ENCODE measurements at regions of chr2 and their contacts with region 1.

Region 1: GRCh38 chr2:61694312-61695274 is 156.4 kb upstream of the XPO1 start:
- DNase-seq: peak; percentile 94
- ATAC-seq: peak; percentile 96
- H3K4me3 ChIP-seq: peak overlapping the region; percentile 50 to 84 (median 79)
- H3K4me3 Mint-ChIP-seq: peak overlapping the region; percentile 94
- H3K27ac ChIP-seq: peak overlapping the region; percentile 54 to 82
- H3K27ac Mint-ChIP-seq: peak overlapping the region; percentile 88
- H3K4me1 ChIP-seq: peaks cover 9 to 17% of the 10 kb centered on the region in 2 donors
- H3K4me1 Mint-ChIP-seq: peaks cover 13% of the 10 kb centered on the region
- H3K27me3 ChIP-seq: no peaks in the 10 kb centered on the region
- H3K27me3 Mint-ChIP-seq: no peaks in the 10 kb centered on the region
- CTCF ChIP-seq: peak; percentile 70

Region 2: DNA sequence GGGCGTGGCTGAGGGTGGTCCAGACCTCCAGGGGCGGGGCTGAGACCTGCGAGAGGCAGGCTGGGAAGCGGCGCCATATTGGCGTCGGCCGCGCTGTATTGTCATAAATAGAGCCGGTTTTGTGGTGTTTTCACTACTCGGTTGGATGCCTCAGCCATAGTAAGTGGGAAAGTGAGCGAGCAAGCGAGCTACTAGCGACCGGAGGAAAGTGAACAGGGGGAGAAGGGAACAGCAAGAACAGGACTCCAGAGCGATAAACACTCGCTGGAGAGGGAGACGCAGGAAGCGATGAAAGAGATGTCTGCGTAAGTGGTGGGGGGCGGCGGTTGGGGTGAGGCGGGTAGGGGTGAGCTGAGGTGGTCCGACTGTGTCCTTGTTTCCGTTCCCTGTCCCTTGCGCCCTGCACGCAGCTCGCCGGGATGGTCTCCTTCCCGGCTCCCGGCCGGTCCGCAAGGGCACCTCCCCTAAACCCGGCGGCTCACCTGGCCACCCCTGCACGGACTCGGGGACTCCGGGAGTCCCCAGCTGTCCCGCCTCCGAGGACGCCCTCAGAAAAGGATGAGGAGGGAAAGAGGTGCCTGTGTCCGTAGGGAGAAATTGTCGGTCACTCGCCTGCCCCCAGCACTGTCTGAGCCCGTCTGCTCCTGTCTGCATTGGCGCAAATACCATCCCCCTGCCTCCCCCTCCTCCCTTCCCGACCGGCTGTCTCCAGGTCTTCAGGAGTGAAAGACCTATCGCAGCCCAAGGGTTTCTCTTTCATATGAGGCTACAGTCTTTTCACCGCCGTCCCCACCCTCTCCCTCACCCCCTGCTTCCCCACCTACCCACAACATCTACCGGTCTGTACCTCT is 938.2 kb before region 1 on chr2 and contains the start of gene PAPOLG:
- CTCF ChIA-PET with region 1: no interaction called
- POLR2A ChIA-PET with region 1: no interaction called
- intact Hi-C with region 1: loop called (anchors 1 kb)
- DNase-seq: peak; percentile 96
- ATAC-seq: peak; percentile 100
- H3K4me3 ChIP-seq: peak within 1 kb of the TSS; percentile 77 to 100 (median 87)
- H3K4me3 Mint-ChIP-seq: peak within 1 kb of the TSS; percentile 97
- H3K27ac ChIP-seq: peak within 1 kb of the TSS; percentile 85 to 87
- H3K27ac Mint-ChIP-seq: peak within 1 kb of the TSS; percentile 96
- H3K4me1 ChIP-seq: peaks cover 13 to 15% of the 10 kb centered on the region in 2 donors
- H3K4me1 Mint-ChIP-seq: peaks cover 29% of the 10 kb centered on the region
- H3K27me3 ChIP-seq: no peaks in the 10 kb centered on the region
- H3K27me3 Mint-ChIP-seq: no peaks in the 10 kb centered on the region
- CTCF ChIP-seq: no peak
- total RNA-seq, gene PAPOLG: 27.5 and 37.2 TPM in 2 replicates

Region 3: GRCh38 chr2:61044636-61045035 is 650.0 kb before region 1 on chr2:
- CTCF ChIA-PET with region 1: no interaction called
- POLR2A ChIA-PET with region 1: no interaction called
- intact Hi-C with region 1: no loop called
- DNase-seq: peak; percentile 16
- ATAC-seq: peak; percentile 39
- H3K4me3 ChIP-seq: no peak overlapping the region
- H3K4me3 Mint-ChIP-seq: no peak overlapping the region
- H3K27ac ChIP-seq: no peak overlapping the region
- H3K27ac Mint-ChIP-seq: peak overlapping the region; percentile 5
- H3K4me1 ChIP-seq: peaks cover 0 to 6% of the 10 kb centered on the region in 2 donors
- H3K4me1 Mint-ChIP-seq: peaks cover 20% of the 10 kb centered on the region
- H3K27me3 ChIP-seq: no peaks in the 10 kb centered on the region
- H3K27me3 Mint-ChIP-seq: no peaks in the 10 kb centered on the region
- CTCF ChIP-seq: no peak

Region 4: GRCh38 chr2:61493523-61493942 is 201.1 kb before region 1 on chr2:
- CTCF ChIA-PET with region 1: no interaction called
- POLR2A ChIA-PET with region 1: no interaction called
- intact Hi-C with region 1: no loop called
- DNase-seq: peak; percentile 18
- ATAC-seq: no peak
- H3K4me3 ChIP-seq: no peak overlapping the region
- H3K4me3 Mint-ChIP-seq: no peak overlapping the region
- H3K27ac ChIP-seq: peak overlapping the region in 1 of 2 donors; percentile 74
- H3K27ac Mint-ChIP-seq: peak overlapping the region; percentile 43
- H3K4me1 ChIP-seq: peaks cover 5 to 11% of the 10 kb centered on the region in 2 donors
- H3K4me1 Mint-ChIP-seq: peaks cover 14% of the 10 kb centered on the region
- H3K27me3 ChIP-seq: no peaks in the 10 kb centered on the region
- H3K27me3 Mint-ChIP-seq: no peaks in the 10 kb centered on the region
- CTCF ChIP-seq: no peak

Region 5: DNA sequence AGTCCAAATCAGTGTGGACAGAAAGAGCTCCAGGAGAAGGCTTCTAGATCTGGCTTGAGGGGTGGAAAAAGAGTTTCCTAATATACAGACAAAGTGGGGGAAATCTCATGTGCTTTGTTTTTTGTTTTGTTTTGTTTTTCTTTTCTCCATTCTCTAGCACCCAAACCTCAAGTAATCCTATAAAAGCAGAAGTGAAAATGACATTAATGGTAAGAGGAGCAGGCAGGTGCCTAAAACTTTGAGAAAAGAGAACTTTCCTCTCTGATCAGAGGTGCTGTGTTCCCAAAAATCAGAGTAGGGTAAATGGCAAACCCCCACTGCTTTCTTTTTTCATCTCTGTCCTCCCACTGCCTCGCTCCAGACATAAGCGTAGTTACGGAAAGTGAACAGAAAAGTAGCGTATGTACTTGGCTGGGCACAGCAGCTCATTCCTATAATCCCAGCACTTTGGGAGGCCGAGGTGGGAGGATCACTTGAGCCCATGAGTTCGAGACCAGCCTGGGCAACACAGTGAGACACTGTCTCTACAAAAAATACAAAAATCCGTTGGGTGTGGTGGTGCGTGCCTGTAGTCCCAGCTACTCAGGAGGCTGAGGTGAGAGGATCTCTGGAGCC is 81.5 kb after region 1 on chr2:
- CTCF ChIA-PET with region 1: interaction called, 3 read pairs
- POLR2A ChIA-PET with region 1: no interaction called
- intact Hi-C with region 1: loop called (anchors 5 kb)
- DNase-seq: peak; percentile 71
- ATAC-seq: peak; percentile 81
- H3K4me3 ChIP-seq: peak overlapping the region in 2 of 5 experiments; percentile 21 to 43
- H3K4me3 Mint-ChIP-seq: peak overlapping the region; percentile 61
- H3K27ac ChIP-seq: peak overlapping the region; percentile 65 to 71
- H3K27ac Mint-ChIP-seq: peak overlapping the region; percentile 90
- H3K4me1 ChIP-seq: peaks cover 18 to 21% of the 10 kb centered on the region in 2 donors
- H3K4me1 Mint-ChIP-seq: peaks cover 21% of the 10 kb centered on the region
- H3K27me3 ChIP-seq: no peaks in the 10 kb centered on the region
- H3K27me3 Mint-ChIP-seq: peaks cover 13% of the 10 kb centered on the region
- CTCF ChIP-seq: no peak

Region 6: DNA sequence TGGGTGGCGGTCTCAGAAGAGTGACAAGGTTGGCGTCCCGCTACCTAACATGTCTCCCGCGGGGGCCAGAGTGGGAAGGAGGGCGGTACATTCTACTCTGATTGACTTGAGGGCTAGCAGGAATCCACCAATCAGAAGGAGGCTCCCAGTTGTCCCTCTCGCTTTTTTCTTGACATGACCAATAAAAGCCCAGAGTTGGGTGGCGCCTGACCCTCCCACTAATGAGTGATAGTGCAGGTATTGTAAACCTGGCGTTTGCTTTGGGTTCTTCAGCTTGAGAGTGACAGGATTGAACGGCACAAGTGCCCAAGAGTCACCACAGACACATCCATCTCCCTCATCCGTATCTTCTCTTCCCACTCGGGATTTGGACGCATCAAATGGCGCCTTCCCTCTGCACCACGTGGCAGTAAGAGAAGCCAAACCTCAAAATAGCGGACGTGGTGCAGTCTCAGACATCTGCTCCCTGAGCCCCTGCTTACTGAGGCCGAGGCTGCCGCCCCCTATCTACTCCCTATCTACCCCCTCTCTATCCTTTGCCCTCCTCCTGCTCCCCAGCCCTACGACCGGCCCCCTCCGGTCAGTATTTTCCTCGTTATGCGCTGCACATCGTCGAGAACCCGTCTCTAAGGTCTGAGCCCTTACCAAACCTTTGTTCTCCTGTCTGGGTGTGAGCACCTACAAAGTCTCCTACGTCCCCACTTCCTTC is 160.0 kb after region 1 on chr2:
- CTCF ChIA-PET with region 1: interaction called, 4 read pairs
- POLR2A ChIA-PET with region 1: no interaction called
- intact Hi-C with region 1: loop called (anchors 1 kb)
- DNase-seq: peak; percentile 96
- ATAC-seq: peak; percentile 83
- H3K4me3 ChIP-seq: peak overlapping the region; percentile 92 to 99 (median 98)
- H3K4me3 Mint-ChIP-seq: peak overlapping the region; percentile 94
- H3K27ac ChIP-seq: peak overlapping the region; percentile 56 to 68
- H3K27ac Mint-ChIP-seq: peak overlapping the region; percentile 92
- H3K4me1 ChIP-seq: peaks cover 11 to 16% of the 10 kb centered on the region in 2 donors
- H3K4me1 Mint-ChIP-seq: peaks cover 23% of the 10 kb centered on the region
- H3K27me3 ChIP-seq: no peaks in the 10 kb centered on the region
- H3K27me3 Mint-ChIP-seq: no peaks in the 10 kb centered on the region
- CTCF ChIP-seq: no peak

Region 7: GRCh38 chr2:62705007-62705829 is 1010.6 kb after region 1 on chr2 and contains the start of gene EHBP1:
- CTCF ChIA-PET with region 1: no interaction called
- POLR2A ChIA-PET with region 1: no interaction called
- intact Hi-C with region 1: loop called (anchors 5 kb)
- DNase-seq: peak; percentile 98
- ATAC-seq: peak; percentile 93
- H3K4me3 ChIP-seq: peak within 1 kb of the TSS; percentile 67 to 85 (median 74)
- H3K4me3 Mint-ChIP-seq: peak within 1 kb of the TSS; percentile 93
- H3K27ac ChIP-seq: peak within 1 kb of the TSS; percentile 35 to 47
- H3K27ac Mint-ChIP-seq: peak within 1 kb of the TSS; percentile 80
- H3K4me1 ChIP-seq: peaks cover 20 to 21% of the 10 kb centered on the region in 2 donors
- H3K4me1 Mint-ChIP-seq: peaks cover 33% of the 10 kb centered on the region
- H3K27me3 ChIP-seq: no peaks in the 10 kb centered on the region
- H3K27me3 Mint-ChIP-seq: no peaks in the 10 kb centered on the region
- CTCF ChIP-seq: no peak
- total RNA-seq, gene EHBP1: 34.7 and 36.3 TPM in 2 replicates

Measured in B cell (primary cell).